CD8-positive, alpha-beta T cell (primary cell): ENCODE measurements at regions of chr1 and their contacts with region 1.

Region 1: DNA sequence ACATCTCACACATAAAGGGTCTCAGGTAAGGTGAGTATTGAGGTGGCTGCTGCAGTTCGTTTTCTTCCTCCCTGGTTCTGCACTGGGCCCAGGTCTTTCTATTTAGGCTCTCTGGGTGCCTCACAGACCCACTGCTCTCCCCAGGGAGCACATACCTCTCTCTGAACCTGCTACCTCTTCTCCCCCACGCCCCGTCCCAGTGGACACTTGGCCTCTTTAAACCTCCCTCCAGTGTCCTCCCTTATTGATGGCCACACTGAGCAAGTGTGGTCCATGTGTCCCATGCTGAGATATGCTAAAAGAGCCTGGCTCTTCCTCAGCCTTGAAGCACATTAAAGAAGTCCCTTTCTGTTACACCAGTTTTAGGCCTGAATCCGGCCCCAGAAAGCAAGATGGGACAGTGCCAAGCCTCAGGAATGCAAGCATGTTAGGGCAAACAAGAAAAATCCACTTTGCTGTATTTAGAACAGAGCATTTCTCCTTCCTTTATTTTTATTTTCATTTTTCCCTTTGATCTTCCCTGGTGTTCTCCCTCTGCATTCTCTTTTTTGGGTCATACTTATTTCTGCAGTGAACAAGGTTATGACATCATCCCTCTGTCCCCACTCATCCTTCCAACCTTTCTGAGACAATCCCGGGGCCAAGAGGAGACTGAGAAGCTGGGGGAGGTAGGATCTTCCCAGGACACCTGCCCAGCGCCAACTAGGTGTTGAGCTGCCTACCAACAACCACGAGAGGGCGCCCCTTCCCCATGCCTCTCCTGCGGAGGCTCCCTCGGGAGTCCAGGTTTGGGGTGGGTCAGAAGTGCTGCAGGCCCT is 5.0 kb upstream of the CHI3L2 start:
- DNase-seq: peak; percentile 43 to 89 (median 80)
- ATAC-seq: peak; percentile 17
- H3K4me3 ChIP-seq: peak overlapping the region; percentile 38 to 42
- H3K4me3 Mint-ChIP-seq: peak overlapping the region; percentile 81
- H3K27ac ChIP-seq: peak overlapping the region; percentile 44 to 84
- H3K27ac Mint-ChIP-seq: peak overlapping the region; percentile 94
- H3K4me1 ChIP-seq: peaks cover 97% of the 10 kb centered on the region
- H3K4me1 Mint-ChIP-seq: peaks cover 91% of the 10 kb centered on the region
- H3K27me3 ChIP-seq: no peaks in the 10 kb centered on the region
- H3K27me3 Mint-ChIP-seq: no peaks in the 10 kb centered on the region
- CTCF ChIP-seq: peak; percentile 85

Region 2: DNA sequence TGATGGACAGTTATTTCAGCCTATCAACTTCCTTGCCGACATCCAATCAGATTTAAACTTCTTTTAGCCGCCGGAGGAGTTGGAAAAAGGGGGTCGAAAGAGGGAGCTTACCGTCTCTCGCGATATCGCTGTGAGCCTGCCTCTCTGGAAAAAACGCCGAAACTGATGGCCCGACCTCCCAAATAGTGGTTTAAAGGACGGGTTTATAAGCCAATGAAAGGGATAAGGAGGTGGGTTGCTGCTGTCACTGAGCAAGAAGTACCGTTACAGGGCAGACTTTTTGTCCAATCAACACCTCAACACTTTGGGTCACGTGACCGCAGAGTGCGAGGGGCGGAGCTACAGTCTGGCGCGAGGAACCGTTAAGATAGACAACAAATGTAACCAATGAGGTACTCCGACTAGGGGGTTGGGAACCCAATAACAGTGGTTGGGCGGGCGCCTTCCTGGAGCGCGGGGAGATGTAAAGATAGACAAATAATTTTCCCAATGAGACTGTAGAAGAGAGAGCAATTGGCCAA is 883.6 kb before region 1 on chr1 and contains the start of gene RBM15:
- CTCF ChIA-PET with region 1: no interaction called
- POLR2A ChIA-PET with region 1: no interaction called
- intact Hi-C with region 1: loop called in 1 of 2 experiments (anchors 10 kb)
- DNase-seq: peak; percentile 92 to 100 (median 96)
- ATAC-seq: peak; percentile 74
- H3K4me3 ChIP-seq: peak within 1 kb of the TSS; percentile 91 to 97
- H3K4me3 Mint-ChIP-seq: no peak within 1 kb of the TSS
- H3K27ac ChIP-seq: peak within 1 kb of the TSS; percentile 87 to 98
- H3K27ac Mint-ChIP-seq: no peak within 1 kb of the TSS
- H3K4me1 ChIP-seq: peaks cover 49% of the 10 kb centered on the region
- H3K4me1 Mint-ChIP-seq: peaks cover 56% of the 10 kb centered on the region
- H3K27me3 ChIP-seq: no peaks in the 10 kb centered on the region
- H3K27me3 Mint-ChIP-seq: no peaks in the 10 kb centered on the region
- CTCF ChIP-seq: no peak
- total RNA-seq, gene RBM15: 57.1 to 59.3 TPM

Region 3: DNA sequence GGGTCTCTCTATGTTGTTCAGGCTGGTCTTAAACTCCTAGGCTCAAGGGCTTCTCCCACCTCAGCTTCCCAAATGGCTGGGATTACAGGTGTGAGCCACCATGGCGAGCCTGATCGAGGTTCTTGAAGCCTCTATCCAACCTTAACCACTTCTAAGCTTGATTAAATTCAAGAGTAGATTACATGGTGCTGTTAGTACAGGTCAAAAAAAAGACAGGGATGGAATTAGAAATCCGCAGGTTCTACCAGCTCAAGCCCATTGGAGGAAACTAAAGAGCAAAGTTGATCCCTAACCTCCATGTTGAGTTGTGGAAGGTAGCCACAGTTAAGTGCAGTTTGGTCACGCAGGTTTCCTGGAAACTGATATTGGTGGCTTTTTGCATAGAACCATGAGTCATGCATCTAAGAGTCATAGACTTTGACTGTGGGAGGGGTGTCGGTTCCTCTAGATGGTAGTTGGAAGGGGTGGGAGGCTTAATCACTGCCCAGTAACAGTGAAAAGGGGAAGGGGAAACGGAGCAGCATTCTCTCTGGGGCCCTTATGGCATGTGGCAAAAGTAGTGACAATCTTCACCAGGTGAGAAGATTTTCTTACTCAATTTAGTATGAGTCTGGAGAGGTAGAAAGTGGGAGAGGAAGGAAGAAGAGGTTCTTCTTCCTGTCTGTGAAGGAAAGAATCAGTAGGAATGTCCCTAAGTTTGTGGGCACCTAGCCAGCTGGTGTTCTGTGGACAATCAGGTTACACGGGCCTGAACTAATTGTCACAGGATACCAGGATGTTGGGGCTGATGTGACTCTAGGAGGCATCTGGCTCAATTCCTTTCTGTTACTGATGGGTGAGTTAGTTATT is 342.5 kb before region 1 on chr1:
- CTCF ChIA-PET with region 1: no interaction called
- POLR2A ChIA-PET with region 1: interaction called, 7 read pairs
- intact Hi-C with region 1: loop called (anchors 5 kb)
- DNase-seq: peak in 7 of 9 experiments; percentile 38 to 86 (median 62)
- ATAC-seq: peak; percentile 51
- H3K4me3 ChIP-seq: peak overlapping the region; percentile 0 to 25
- H3K4me3 Mint-ChIP-seq: peak overlapping the region; percentile 80
- H3K27ac ChIP-seq: peak overlapping the region; percentile 8 to 90
- H3K27ac Mint-ChIP-seq: peak overlapping the region; percentile 99
- H3K4me1 ChIP-seq: peaks cover 82% of the 10 kb centered on the region
- H3K4me1 Mint-ChIP-seq: peaks cover 84% of the 10 kb centered on the region
- H3K27me3 ChIP-seq: no peaks in the 10 kb centered on the region
- H3K27me3 Mint-ChIP-seq: no peaks in the 10 kb centered on the region
- CTCF ChIP-seq: no peak

Region 4: DNA sequence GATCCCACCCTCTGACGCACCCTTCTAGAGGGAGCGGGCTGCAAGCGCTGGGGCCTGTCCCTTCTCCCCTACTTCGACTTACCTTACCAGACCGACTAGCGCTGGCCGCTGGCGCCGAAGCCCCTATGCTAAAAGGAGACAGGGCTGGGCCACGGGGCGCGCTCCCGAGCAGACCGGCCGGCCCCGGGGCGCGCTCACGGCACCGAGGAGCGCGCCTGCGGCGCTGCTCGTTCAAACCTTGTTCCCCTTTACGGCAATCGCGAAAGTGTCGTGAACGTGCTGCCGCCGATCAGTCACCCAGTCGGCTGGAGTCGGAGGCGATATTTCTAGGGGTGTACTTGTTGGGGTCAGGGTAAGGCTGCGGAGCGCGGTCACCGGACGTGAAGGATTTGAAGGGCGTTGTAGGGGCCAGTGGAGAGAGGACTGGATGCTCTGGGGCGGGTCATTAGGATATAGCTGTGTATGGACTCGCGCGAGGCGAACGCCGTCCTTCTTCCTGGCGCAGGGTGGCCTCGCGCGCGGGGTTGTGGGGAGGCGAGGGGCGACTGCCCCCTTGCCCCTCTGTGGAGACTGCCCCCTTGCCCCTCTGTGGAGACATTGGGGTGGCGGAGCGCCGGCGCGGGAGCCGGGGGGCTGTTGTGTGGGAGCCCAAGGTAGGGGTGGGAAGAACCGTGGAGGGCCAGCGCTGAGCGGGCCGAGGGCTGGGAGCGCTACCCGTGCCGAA is 82.4 kb before region 1 on chr1 and contains the starts of genes CEPT1 and DRAM2:
- CTCF ChIA-PET with region 1: interaction called, 9 read pairs
- POLR2A ChIA-PET with region 1: interaction called, 7 read pairs
- intact Hi-C with region 1: loop called in 1 of 2 experiments (anchors 5 kb)
- DNase-seq: peak; percentile 86 to 96 (median 92)
- ATAC-seq: peak; percentile 74
- H3K4me3 ChIP-seq: peak within 1 kb of the TSS; percentile 89 to 97
- H3K4me3 Mint-ChIP-seq: peak within 1 kb of the TSS; percentile 100
- H3K27ac ChIP-seq: peak within 1 kb of the TSS; percentile 85 to 88
- H3K27ac Mint-ChIP-seq: peak within 1 kb of the TSS; percentile 100
- H3K4me1 ChIP-seq: peaks cover 51% of the 10 kb centered on the region
- H3K4me1 Mint-ChIP-seq: peaks cover 57% of the 10 kb centered on the region
- H3K27me3 ChIP-seq: no peaks in the 10 kb centered on the region
- H3K27me3 Mint-ChIP-seq: no peaks in the 10 kb centered on the region
- CTCF ChIP-seq: no peak
- total RNA-seq, gene CEPT1: 21.5 to 22.9 TPM
- total RNA-seq, gene DRAM2: 25.5 to 27.1 TPM

Region 5: GRCh38 chr1:111203681-111204200 is 18.8 kb before region 1 on chr1:
- CTCF ChIA-PET with region 1: interaction called, 429 read pairs
- POLR2A ChIA-PET with region 1: interaction called, 430 read pairs
- intact Hi-C with region 1: loop called (anchors 1 kb)
- DNase-seq: peak; percentile 60 to 92 (median 88)
- ATAC-seq: peak; percentile 41
- H3K4me3 ChIP-seq: peak overlapping the region; percentile 74 to 93
- H3K4me3 Mint-ChIP-seq: peak overlapping the region; percentile 94
- H3K27ac ChIP-seq: peak overlapping the region; percentile 74 to 84
- H3K27ac Mint-ChIP-seq: peak overlapping the region; percentile 97
- H3K4me1 ChIP-seq: peaks cover 54% of the 10 kb centered on the region
- H3K4me1 Mint-ChIP-seq: peaks cover 76% of the 10 kb centered on the region
- H3K27me3 ChIP-seq: no peaks in the 10 kb centered on the region
- H3K27me3 Mint-ChIP-seq: no peaks in the 10 kb centered on the region
- CTCF ChIP-seq: no peak

Region 6: GRCh38 chr1:111399792-111400610 is 177.5 kb after region 1 on chr1:
- CTCF ChIA-PET with region 1: interaction called, 24 read pairs
- POLR2A ChIA-PET with region 1: interaction called, 4 read pairs
- intact Hi-C with region 1: loop called (anchors 1 kb)
- DNase-seq: peak in 8 of 9 experiments; percentile 24 to 68 (median 52)
- ATAC-seq: no peak
- H3K4me3 ChIP-seq: no peak overlapping the region
- H3K4me3 Mint-ChIP-seq: no peak overlapping the region
- H3K27ac ChIP-seq: no peak overlapping the region
- H3K27ac Mint-ChIP-seq: no peak overlapping the region
- H3K4me1 ChIP-seq: no peaks in the 10 kb centered on the region
- H3K4me1 Mint-ChIP-seq: peaks cover 12% of the 10 kb centered on the region
- H3K27me3 ChIP-seq: no peaks in the 10 kb centered on the region
- H3K27me3 Mint-ChIP-seq: no peaks in the 10 kb centered on the region
- CTCF ChIP-seq: peak; percentile 65

Region 7: DNA sequence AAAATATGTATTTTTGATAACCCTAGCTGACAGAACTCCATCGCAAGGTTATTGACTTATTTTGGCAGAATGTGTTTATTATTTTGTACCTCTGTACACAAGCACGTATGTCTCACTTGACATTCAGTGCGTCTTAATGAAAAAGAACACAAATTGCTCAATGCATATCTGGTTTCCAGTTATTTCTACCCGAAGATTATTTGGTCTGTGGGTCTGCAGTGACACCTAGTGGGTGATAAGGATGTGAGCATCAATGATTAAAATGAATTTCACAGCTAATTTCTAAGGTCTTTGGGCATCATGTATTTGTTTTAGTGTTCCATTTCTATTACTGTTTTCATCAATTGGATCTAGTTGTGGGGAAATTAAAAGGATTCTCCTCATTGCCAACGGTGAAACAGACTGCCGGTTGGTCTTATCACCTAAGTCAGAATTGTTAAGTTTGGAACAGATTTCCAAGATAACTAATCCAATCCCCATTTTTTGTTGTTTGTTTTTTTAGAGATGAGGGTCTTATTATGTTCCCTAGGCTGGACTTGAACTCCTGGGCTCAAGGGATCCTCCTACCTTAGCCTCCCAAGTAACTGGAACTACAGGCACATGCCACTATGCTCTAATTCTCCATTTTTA is 547.1 kb after region 1 on chr1:
- CTCF ChIA-PET with region 1: interaction called, 4 read pairs
- POLR2A ChIA-PET with region 1: no interaction called
- intact Hi-C with region 1: loop called in 1 of 2 experiments (anchors 1 kb)
- DNase-seq: peak; percentile 7 to 82 (median 57)
- ATAC-seq: peak; percentile 72
- H3K4me3 ChIP-seq: no peak overlapping the region
- H3K4me3 Mint-ChIP-seq: no peak overlapping the region
- H3K27ac ChIP-seq: no peak overlapping the region
- H3K27ac Mint-ChIP-seq: no peak overlapping the region
- H3K4me1 ChIP-seq: no peaks in the 10 kb centered on the region
- H3K4me1 Mint-ChIP-seq: peaks cover 7% of the 10 kb centered on the region
- H3K27me3 ChIP-seq: no peaks in the 10 kb centered on the region
- H3K27me3 Mint-ChIP-seq: no peaks in the 10 kb centered on the region
- CTCF ChIP-seq: peak; percentile 94